WTC11 (cell line): ENCODE measurements at regions of chr7 and their contacts with region 1.

Region 1: DNA sequence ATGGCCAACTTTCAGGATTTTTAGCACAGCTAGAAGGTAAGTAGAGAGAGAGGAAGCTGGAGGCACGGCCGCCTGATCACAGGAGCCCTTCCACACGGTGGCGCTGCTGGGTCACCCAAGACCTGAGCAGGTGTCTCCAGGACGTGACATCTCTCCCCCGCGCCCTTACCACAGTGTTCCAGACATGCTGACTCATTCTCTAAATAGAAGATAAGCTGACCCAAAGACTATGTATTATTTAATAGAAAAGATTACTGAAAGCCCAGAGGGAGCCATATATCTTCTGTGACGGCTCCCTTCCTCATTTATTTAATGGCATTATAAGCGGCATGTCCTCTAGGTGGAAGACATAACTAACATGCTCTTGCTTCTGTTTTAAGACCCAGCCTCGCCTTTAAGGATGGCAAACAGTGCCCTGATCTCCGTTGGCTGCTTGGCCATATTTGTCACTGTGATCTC is 26.0 kb upstream of the MALSU1 start:
- DNase-seq: peak; percentile 95
- ATAC-seq: peak; percentile 94
- H3K4me3 Mint-ChIP-seq: peak overlapping the region; percentile 56
- H3K27ac Mint-ChIP-seq: peak overlapping the region; percentile 76
- H3K4me1 Mint-ChIP-seq: peaks cover 4% of the 10 kb centered on the region
- H3K27me3 Mint-ChIP-seq: no peaks in the 10 kb centered on the region
- CTCF ChIP-seq: peak; percentile 87

Region 2: GRCh38 chr7:23234569-23235296 is 38.4 kb before region 1 on chr7:
- CTCF ChIA-PET with region 1: no interaction called
- POLR2A ChIA-PET with region 1: no interaction called
- DNase-seq: no peak
- ATAC-seq: no peak
- H3K4me3 Mint-ChIP-seq: no peak overlapping the region
- H3K27ac Mint-ChIP-seq: no peak overlapping the region
- H3K4me1 Mint-ChIP-seq: peaks cover 12% of the 10 kb centered on the region
- H3K27me3 Mint-ChIP-seq: no peaks in the 10 kb centered on the region
- CTCF ChIP-seq: no peak

Region 3: GRCh38 chr7:23247603-23248335 is 25.4 kb before region 1 on chr7:
- CTCF ChIA-PET with region 1: interaction called, 22 read pairs
- POLR2A ChIA-PET with region 1: no interaction called
- DNase-seq: peak; percentile 52
- ATAC-seq: peak; percentile 80
- H3K4me3 Mint-ChIP-seq: peak overlapping the region; percentile 57
- H3K27ac Mint-ChIP-seq: no peak overlapping the region
- H3K4me1 Mint-ChIP-seq: peaks cover 10% of the 10 kb centered on the region
- H3K27me3 Mint-ChIP-seq: peaks cover 55% of the 10 kb centered on the region
- CTCF ChIP-seq: no peak

Region 4: DNA sequence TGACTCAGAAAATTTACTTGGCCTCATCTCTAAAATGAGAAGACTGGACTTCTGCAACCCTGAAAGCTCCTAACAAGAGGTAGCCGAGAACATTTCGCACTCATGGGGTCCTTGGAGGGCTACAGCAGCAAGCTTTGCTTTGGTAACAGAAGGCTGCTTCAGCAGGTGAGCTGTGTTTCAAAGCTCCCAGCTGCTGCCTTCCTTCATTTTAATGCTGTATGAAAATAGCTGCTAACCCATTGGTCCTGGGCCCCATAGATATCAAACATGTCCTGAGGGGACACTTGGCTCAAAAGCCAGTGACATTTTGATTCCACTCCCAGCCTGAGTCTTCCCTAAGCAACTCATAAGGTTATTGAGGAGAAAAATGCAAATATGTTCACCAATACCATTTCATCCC is 11.7 kb after region 1 on chr7:
- CTCF ChIA-PET with region 1: interaction called, 17 read pairs
- POLR2A ChIA-PET with region 1: no interaction called
- DNase-seq: no peak
- ATAC-seq: no peak
- H3K4me3 Mint-ChIP-seq: no peak overlapping the region
- H3K27ac Mint-ChIP-seq: no peak overlapping the region; the same call in 1 of the 2 replicates
- H3K4me1 Mint-ChIP-seq: peaks cover 7% of the 10 kb centered on the region
- H3K27me3 Mint-ChIP-seq: no peaks in the 10 kb centered on the region
- CTCF ChIP-seq: no peak

Region 5: GRCh38 chr7:23298885-23299769 is 26.0 kb after region 1 on chr7 and contains the start of gene MALSU1:
- CTCF ChIA-PET with region 1: interaction called, 20 read pairs
- POLR2A ChIA-PET with region 1: no interaction called
- DNase-seq: peak; percentile 95
- ATAC-seq: peak; percentile 98
- H3K4me3 Mint-ChIP-seq: peak within 1 kb of the TSS; percentile 91
- H3K27ac Mint-ChIP-seq: peak within 1 kb of the TSS; percentile 93
- H3K4me1 Mint-ChIP-seq: peaks cover 16% of the 10 kb centered on the region
- H3K27me3 Mint-ChIP-seq: peaks cover 13% of the 10 kb centered on the region
- CTCF ChIP-seq: no peak
- total RNA-seq, gene MALSU1: 75.2 to 81.5 TPM (median 81.4 TPM) in 3 replicates